Gastrocnemius medialis (tissue), 4 donors: ENCODE measurements at regions of chr14 and their contacts with region 1.

Region 1: DNA sequence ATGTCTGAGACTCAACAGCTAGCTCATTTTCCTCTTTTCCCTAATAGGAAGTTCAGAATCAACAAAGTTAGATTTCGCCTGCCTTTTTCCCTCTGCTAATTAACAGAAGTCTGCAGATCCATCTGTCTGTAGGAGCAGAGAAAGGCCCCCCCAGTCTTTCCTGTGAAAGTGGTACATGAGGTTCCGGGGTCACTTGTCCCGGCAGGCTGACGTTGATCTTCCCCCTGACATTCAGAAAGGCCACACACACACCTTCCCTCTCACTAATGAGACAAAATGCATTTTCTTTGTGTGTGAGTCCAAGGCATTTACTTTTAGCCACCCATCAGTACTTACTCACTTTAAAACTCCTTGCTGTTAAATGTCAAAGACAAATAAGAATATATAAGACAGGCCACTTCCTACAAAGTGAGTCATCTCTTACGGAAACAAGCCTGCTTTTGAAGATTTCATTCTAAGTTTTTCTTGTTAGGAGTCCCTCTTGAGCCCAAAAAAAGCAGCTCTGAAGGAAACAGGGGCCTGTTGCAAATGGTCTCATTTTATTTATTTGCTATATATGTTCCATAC is 138.7 kb downstream of the TTC7B start:
- DNase-seq: no peak
- ATAC-seq: no peak
- H3K4me3 ChIP-seq: no peak overlapping the region
- H3K27ac ChIP-seq: peak overlapping the region; percentile 94 to 99 (median 96)
- H3K4me1 ChIP-seq: peaks cover 52 to 67% of the 10 kb centered on the region in 2 donors
- H3K27me3 ChIP-seq: no peaks in the 10 kb centered on the region
- CTCF ChIP-seq: no peak
- POLR2A ChIP-seq: no peak

Region 2: DNA sequence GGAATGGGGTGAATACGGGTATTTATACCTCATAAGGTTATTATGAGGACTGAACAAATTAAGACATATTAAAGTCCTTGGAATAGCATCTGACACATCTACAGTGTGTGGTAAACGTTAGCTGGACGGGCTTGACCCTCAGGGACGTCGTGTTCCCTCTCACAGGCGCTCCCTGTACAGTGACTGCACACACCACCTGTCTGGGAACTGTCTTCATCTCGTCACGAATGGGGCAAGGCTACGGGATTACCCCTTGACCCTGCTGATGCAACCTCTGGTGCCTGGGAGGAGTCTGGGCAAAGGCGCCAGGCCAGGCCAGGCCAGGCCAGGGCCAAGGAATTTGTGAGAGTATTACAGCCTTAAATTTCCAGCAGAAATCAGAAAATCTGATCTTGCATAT is 89.6 kb before region 1 on chr14:
- in situ Hi-C with region 1: no loop called
- intact Hi-C with region 1: loop called (anchors 1 kb)
- DNase-seq: peak; percentile 94 to 98
- ATAC-seq: peak; percentile 96 to 97
- H3K4me3 ChIP-seq: no peak overlapping the region
- H3K27ac ChIP-seq: peak overlapping the region; percentile 84 to 91 (median 87)
- H3K4me1 ChIP-seq: peaks cover 16 to 17% of the 10 kb centered on the region in 2 donors
- H3K27me3 ChIP-seq: no peaks in the 10 kb centered on the region
- CTCF ChIP-seq: no peak
- POLR2A ChIP-seq: no peak

Region 3: GRCh38 chr14:90624223-90624622 is 53.3 kb before region 1 on chr14:
- in situ Hi-C with region 1: loop called in 2 of 4 experiments (anchors 5 to 10 kb)
- intact Hi-C with region 1: loop called (anchors 2 kb)
- DNase-seq: peak; percentile 94 to 97
- ATAC-seq: peak; percentile 58 to 64
- H3K4me3 ChIP-seq: peak overlapping the region in 2 of 4 donors; percentile 9 to 28
- H3K27ac ChIP-seq: peak overlapping the region; percentile 89 to 96 (median 94)
- H3K4me1 ChIP-seq: peaks cover 51 to 68% of the 10 kb centered on the region in 2 donors
- H3K27me3 ChIP-seq: no peaks in the 10 kb centered on the region
- CTCF ChIP-seq: no peak
- POLR2A ChIP-seq: peak; percentile 47 to 48

Region 4: DNA sequence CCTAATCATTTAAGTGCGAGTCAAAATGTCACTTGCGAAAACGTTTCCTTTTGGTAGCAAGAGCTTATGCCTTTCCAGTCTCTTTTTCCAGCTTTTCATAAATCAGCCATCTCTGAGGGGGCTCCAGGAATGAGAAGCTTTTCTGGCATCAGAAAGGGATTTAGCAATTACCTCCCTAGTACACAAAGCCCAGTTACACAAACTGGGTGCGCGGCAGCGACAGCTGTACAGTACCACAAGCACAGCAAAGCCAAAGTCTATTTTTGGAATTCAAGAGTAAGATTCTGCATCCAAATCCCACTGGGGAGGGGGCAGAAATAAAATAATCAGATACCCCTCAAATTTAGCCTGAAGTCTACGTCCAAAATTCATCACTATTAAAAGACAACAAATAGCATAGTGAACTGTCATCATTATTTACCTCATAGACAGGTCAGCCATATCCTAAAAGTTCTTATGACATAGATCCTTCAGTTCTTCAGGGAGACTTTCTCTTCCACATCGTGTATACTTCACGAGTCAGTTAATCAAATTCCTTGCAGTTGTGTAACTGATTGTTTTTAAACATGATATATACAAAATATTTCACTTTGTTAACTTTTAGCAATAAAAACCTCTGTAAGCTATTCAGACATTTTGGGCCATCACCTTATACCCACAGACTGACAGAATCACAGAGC is 12.1 kb before region 1 on chr14:
- in situ Hi-C with region 1: no loop called
- intact Hi-C with region 1: loop called (anchors 1 kb)
- DNase-seq: peak; percentile 64 to 86
- ATAC-seq: peak; percentile 83 to 91
- H3K4me3 ChIP-seq: no peak overlapping the region
- H3K27ac ChIP-seq: peak overlapping the region; percentile 86 to 91 (median 89)
- H3K4me1 ChIP-seq: peaks cover 41 to 62% of the 10 kb centered on the region in 2 donors
- H3K27me3 ChIP-seq: no peaks in the 10 kb centered on the region
- CTCF ChIP-seq: no peak
- POLR2A ChIP-seq: no peak

Region 5: GRCh38 chr14:90691627-90692026 is 14.1 kb after region 1 on chr14:
- in situ Hi-C with region 1: no loop called
- intact Hi-C with region 1: loop called (anchors 1 kb)
- DNase-seq: peak; percentile 37 to 47
- ATAC-seq: peak; percentile 72 to 76
- H3K4me3 ChIP-seq: peak overlapping the region in 1 of 4 donors; percentile 11
- H3K27ac ChIP-seq: peak overlapping the region; percentile 85 to 97 (median 88)
- H3K4me1 ChIP-seq: peaks cover 51 to 59% of the 10 kb centered on the region in 2 donors
- H3K27me3 ChIP-seq: no peaks in the 10 kb centered on the region
- CTCF ChIP-seq: peak in 1 of 5 experiments; percentile 12
- POLR2A ChIP-seq: no peak